K562 (cell line): ENCODE measurements at regions of chr3 and their contacts with region 1.

Region 1: GRCh38 chr3:70120357-70121121 is 121.0 kb downstream of the SAMMSON start:
- DNase-seq: peak; percentile 64 to 84 (median 66)
- ATAC-seq: peak; percentile 99
- H3K4me3 ChIP-seq: no peak overlapping the region
- H3K27ac ChIP-seq: no peak overlapping the region
- H3K4me1 ChIP-seq: no peaks in the 10 kb centered on the region
- H3K27me3 ChIP-seq: peaks cover 0 to 5% of the 10 kb centered on the region in 2 experiments; a peak in 3 of 5 replicates
- CTCF ChIP-seq: peak; percentile 73 to 90 (median 84)
- EP300 ChIP-seq: no peak
- POLR2A ChIP-seq: no peak
- RAD21 ChIP-seq: peak; percentile 58 to 72

Region 2: DNA sequence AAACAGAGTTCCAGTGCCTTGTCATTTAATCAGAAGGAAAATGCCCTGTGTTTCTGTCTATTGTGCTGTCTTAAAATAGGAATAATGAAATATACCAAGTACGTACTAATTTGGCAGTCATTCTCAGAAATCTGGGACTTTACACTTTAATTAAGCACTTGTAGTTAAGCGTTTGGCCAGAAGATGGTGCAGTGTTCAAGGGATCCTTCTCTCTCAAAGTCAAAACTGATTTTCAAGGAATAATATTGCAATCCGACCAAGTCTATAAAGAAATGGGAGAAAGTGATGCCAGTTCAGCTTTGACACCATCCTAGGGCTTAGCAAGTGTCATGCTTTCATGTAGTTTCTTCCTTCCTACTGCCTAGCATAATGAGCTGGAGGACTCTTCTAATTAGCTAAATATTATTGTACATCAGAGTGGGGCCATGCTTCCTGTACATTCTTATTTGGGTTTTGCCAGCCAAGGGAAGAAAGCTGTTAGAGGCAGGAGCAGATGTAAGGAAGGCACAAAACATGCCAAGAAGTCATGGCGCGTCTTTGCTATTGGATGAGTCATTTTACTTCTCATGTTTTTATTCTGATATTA is 56.3 kb before region 1 on chr3:
- CTCF ChIA-PET with region 1: no interaction called
- POLR2A ChIA-PET with region 1: no interaction called
- in situ Hi-C with region 1: no loop called
- intact Hi-C with region 1: no loop called
- DNase-seq: peak; percentile 7 to 26 (median 12)
- ATAC-seq: no peak
- H3K4me3 ChIP-seq: no peak overlapping the region
- H3K27ac ChIP-seq: no peak overlapping the region
- H3K4me1 ChIP-seq: no peaks in the 10 kb centered on the region
- H3K27me3 ChIP-seq: peaks cover 0 to 2% of the 10 kb centered on the region in 2 experiments; a peak in 3 of 5 replicates
- CTCF ChIP-seq: peak; percentile 17 to 66 (median 53); a peak in 3 of 6 replicates
- EP300 ChIP-seq: no peak
- POLR2A ChIP-seq: no peak
- RAD21 ChIP-seq: peak; percentile 54 to 61

Region 3: GRCh38 chr3:70108072-70108471 is 12.5 kb before region 1 on chr3:
- CTCF ChIA-PET with region 1: no interaction called
- POLR2A ChIA-PET with region 1: interaction called, 10 read pairs
- in situ Hi-C with region 1: no loop called
- intact Hi-C with region 1: no loop called
- DNase-seq: peak; percentile 32 to 54 (median 37)
- ATAC-seq: peak; percentile 86
- H3K4me3 ChIP-seq: no peak overlapping the region
- H3K27ac ChIP-seq: no peak overlapping the region
- H3K4me1 ChIP-seq: no peaks in the 10 kb centered on the region
- H3K27me3 ChIP-seq: no peaks in the 10 kb centered on the region
- CTCF ChIP-seq: peak; percentile 55 to 60 (median 59)
- EP300 ChIP-seq: no peak
- POLR2A ChIP-seq: no peak
- RAD21 ChIP-seq: peak in 1 of 2 experiments; percentile 39; a peak in 2 of 4 replicates

Region 4: GRCh38 chr3:70358978-70359580 is 238.5 kb after region 1 on chr3:
- CTCF ChIA-PET with region 1: no interaction called
- POLR2A ChIA-PET with region 1: no interaction called
- in situ Hi-C with region 1: no loop called
- intact Hi-C with region 1: loop called (anchors 1 kb)
- DNase-seq: peak in 2 of 4 experiments; percentile 4 to 10
- ATAC-seq: no peak
- H3K4me3 ChIP-seq: no peak overlapping the region
- H3K27ac ChIP-seq: no peak overlapping the region
- H3K4me1 ChIP-seq: no peaks in the 10 kb centered on the region
- H3K27me3 ChIP-seq: no peaks in the 10 kb centered on the region
- CTCF ChIP-seq: peak; percentile 32 to 54 (median 43); a peak in 4 of 6 replicates
- EP300 ChIP-seq: no peak
- POLR2A ChIP-seq: no peak
- RAD21 ChIP-seq: peak in 1 of 2 experiments; percentile 46; a peak in 3 of 4 replicates